ENCODE measurements at regions of chr11 and their contacts with region 1.

Region 1: DNA sequence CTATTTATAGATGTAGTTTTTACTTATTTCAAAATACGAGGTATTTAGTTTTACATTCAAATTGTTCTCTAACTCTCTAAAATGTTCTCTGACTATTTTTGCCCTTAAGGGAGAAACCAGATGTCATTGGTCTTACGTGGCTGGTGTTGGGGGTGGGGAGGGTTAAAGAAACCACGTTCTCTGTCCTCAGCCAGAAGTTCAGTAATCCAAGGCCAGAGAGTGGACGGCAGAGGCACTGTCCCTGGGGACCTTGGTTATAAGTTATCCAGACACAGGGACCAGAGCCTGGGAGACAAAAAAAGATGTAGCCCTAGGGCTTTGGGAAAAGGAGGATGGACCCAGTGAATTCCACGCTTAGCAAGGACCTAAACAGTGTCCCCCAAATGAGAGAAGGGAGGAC is 706 bp upstream of the OR51E1 start:
- DNase-seq: no peak
- ATAC-seq: no peak
- H3K4me3 ChIP-seq: no peak overlapping the region
- H3K27ac ChIP-seq: no peak overlapping the region
- H3K4me1 ChIP-seq: no peaks in the 10 kb centered on the region
- H3K27me3 ChIP-seq: no peaks in the 10 kb centered on the region
- CTCF ChIP-seq: no peak
- POLR2A ChIP-seq: no peak

Region 2: GRCh38 chr11:4464216-4465159 is 178.6 kb before region 1 on chr11:
- intact Hi-C with region 1: no loop called
- DNase-seq: no peak
- ATAC-seq: no peak
- H3K4me3 ChIP-seq: no peak overlapping the region
- H3K27ac ChIP-seq: no peak overlapping the region
- H3K4me1 ChIP-seq: no peaks in the 10 kb centered on the region
- H3K27me3 ChIP-seq: no peaks in the 10 kb centered on the region
- CTCF ChIP-seq: no peak
- POLR2A ChIP-seq: no peak

Region 3: GRCh38 chr11:5004424-5005274 is 361.6 kb after region 1 on chr11:
- intact Hi-C with region 1: loop called in 1 of 2 experiments (anchors 5 kb)
- DNase-seq: peak in 2 of 3 donors; percentile 49 to 55
- ATAC-seq: peak; percentile 67 to 80 (median 74)
- H3K4me3 ChIP-seq: no peak overlapping the region
- H3K27ac ChIP-seq: no peak overlapping the region
- H3K4me1 ChIP-seq: no peaks in the 10 kb centered on the region
- H3K27me3 ChIP-seq: no peaks in the 10 kb centered on the region
- CTCF ChIP-seq: peak; percentile 58 to 67 (median 60)
- POLR2A ChIP-seq: no peak

Measured in right lobe of liver (tissue), 6 donors.